GM12878 (cell line): ENCODE measurements at regions of chr15 and their contacts with region 1.

Region 1: DNA sequence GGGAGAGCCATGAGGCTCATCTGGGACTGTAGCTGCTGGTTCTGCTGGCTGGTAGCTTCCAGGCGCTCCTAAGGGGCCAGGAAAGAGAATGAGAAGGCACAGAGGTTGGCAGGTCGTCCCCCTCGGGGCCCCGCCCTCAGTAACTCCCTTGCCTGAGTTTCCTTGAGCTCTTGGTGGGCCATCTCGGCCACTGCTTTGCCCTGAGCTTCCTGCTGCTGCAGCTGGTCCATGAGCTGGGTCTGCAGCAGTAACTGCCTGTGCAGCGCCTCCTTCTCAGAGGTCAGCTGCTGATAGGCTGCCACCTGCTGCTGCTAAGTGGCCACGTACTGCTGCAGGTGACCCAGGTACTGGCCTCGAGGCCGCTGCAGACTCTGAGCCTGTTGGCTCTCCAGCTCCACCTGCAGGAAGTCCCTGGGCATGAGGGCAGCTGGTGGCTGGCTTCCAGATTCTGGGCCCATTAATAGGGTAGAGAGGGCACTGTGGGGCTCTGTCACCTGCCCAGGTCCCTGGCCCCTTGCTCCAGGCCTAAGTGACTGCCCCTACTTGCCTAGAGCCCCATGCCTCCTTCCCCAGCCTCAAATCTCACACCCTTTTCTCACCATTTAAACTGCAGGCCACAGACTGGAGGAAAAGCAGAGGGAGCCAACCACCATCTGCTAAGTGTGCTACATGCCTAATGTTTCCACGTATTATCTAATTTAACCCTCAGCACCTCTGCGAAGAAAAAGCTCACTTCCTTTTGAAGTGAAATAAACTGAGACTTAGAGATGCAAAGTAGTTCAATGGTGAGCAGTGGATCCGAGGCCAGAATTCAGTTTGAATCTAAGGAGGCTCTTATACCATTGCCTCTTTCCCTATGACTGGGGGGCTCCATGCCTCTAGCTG is 10.8 kb upstream of the VPS33B start:
- DNase-seq: no peak
- ATAC-seq: peak; percentile 94
- H3K4me3 ChIP-seq: no peak overlapping the region
- H3K27ac ChIP-seq: no peak overlapping the region
- H3K4me1 ChIP-seq: no peaks in the 10 kb centered on the region
- H3K27me3 ChIP-seq: no peaks in the 10 kb centered on the region; a peak in 1 of 4 replicates
- CTCF ChIP-seq: peak; percentile 62 to 86 (median 66)
- EP300 ChIP-seq: no peak
- POLR2A ChIP-seq: no peak
- RAD21 ChIP-seq: peak; percentile 61; the same call in 1 of the 2 replicates

Region 2: DNA sequence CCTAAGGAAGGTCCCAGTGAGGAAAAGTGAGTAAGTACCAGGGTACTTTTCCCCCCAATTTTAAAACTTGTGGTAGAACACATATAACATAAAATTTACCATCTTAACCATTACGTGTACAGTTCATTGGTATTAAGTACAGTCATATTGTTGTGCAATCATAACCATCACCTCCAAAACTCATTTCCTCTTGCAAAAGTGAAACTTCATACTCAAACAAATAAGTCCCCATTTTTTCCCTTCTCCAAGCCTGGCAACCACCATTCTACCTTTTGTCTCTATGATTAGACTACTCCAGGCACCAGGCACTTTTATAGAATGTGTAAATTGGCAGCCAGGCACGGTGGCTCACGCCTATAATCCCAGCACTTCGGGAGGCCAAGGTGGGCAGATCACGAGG is 51.0 kb before region 1 on chr15:
- CTCF ChIA-PET with region 1: interaction called, 11 read pairs
- POLR2A ChIA-PET with region 1: no interaction called
- RAD21 ChIA-PET with region 1: interaction called, 8 read pairs
- SMC1A ChIA-PET with region 1: interaction called, 3 read pairs
- in situ Hi-C with region 1: no loop called
- intact Hi-C with region 1: no loop called
- DNase-seq: no peak
- ATAC-seq: peak; percentile 75
- H3K4me3 ChIP-seq: no peak overlapping the region
- H3K27ac ChIP-seq: peak overlapping the region; percentile 79
- H3K4me1 ChIP-seq: peaks cover 27% of the 10 kb centered on the region
- H3K27me3 ChIP-seq: no peaks in the 10 kb centered on the region
- CTCF ChIP-seq: no peak
- EP300 ChIP-seq: no peak
- POLR2A ChIP-seq: no peak
- RAD21 ChIP-seq: no peak

Region 3: DNA sequence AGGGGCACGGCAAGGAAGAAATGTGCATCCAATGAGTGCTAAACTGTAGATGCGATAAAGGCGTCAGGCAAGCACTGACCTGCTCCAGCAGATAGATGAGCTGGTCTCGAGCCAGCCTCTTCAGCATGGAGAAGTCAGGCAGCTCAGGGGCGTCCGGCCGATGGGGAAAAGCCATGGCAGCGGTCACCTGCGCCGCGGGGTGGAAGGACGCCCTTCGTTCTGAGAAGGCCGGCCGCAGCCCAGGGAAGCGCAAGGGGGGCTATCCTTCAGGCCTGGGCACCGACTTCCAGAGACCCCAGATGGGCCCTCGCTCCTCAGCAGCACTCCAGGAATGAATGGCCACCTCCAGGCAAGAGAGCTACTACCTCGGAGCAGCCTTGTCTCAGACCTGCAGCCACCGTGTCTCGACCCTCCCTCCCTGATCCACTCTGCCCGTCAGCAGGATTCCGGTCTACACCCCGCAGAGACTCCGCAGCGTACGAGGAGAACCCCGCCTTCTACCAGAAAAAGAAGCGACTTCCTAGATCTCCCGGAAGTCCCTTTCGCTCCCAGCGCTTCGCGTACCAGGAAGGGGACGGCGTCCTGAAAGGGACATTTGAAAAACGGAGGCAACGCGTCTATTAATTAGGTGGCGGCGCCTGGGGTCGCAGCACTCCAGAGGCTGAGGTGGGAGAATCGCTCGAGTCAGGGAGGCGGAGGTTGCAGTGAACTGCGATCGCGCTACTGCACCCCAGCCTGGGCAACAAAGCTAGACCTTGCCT is 10.9 kb before region 1 on chr15 and contains the start of gene VPS33B:
- CTCF ChIA-PET with region 1: interaction called, 24 read pairs
- POLR2A ChIA-PET with region 1: no interaction called
- RAD21 ChIA-PET with region 1: interaction called, 3 read pairs
- SMC1A ChIA-PET with region 1: interaction called, 3 read pairs
- in situ Hi-C with region 1: no loop called
- intact Hi-C with region 1: no loop called
- DNase-seq: peak; percentile 63
- ATAC-seq: peak; percentile 86
- H3K4me3 ChIP-seq: peak within 1 kb of the TSS; percentile 93
- H3K27ac ChIP-seq: peak within 1 kb of the TSS; percentile 88
- H3K4me1 ChIP-seq: peaks cover 3% of the 10 kb centered on the region; the same call in 1 of the 2 replicates
- H3K27me3 ChIP-seq: no peaks in the 10 kb centered on the region
- CTCF ChIP-seq: no peak
- EP300 ChIP-seq: no peak
- POLR2A ChIP-seq: peak; percentile 80
- RAD21 ChIP-seq: no peak
- polyA plus RNA-seq, gene VPS33B: 11.8 to 18.6 TPM

Region 4: GRCh38 chr15:91165850-91166249 is 132.7 kb after region 1 on chr15:
- CTCF ChIA-PET with region 1: no interaction called
- POLR2A ChIA-PET with region 1: no interaction called
- RAD21 ChIA-PET with region 1: no interaction called
- SMC1A ChIA-PET with region 1: no interaction called
- in situ Hi-C with region 1: no loop called
- intact Hi-C with region 1: no loop called
- DNase-seq: no peak
- ATAC-seq: no peak
- H3K4me3 ChIP-seq: no peak overlapping the region
- H3K27ac ChIP-seq: no peak overlapping the region
- H3K4me1 ChIP-seq: no peaks in the 10 kb centered on the region
- H3K27me3 ChIP-seq: no peaks in the 10 kb centered on the region; a peak in 1 of 4 replicates
- CTCF ChIP-seq: no peak
- EP300 ChIP-seq: no peak
- POLR2A ChIP-seq: no peak
- RAD21 ChIP-seq: no peak